ENCODE measurements at regions of chr9 and their contacts with region 1.

Region 1: DNA sequence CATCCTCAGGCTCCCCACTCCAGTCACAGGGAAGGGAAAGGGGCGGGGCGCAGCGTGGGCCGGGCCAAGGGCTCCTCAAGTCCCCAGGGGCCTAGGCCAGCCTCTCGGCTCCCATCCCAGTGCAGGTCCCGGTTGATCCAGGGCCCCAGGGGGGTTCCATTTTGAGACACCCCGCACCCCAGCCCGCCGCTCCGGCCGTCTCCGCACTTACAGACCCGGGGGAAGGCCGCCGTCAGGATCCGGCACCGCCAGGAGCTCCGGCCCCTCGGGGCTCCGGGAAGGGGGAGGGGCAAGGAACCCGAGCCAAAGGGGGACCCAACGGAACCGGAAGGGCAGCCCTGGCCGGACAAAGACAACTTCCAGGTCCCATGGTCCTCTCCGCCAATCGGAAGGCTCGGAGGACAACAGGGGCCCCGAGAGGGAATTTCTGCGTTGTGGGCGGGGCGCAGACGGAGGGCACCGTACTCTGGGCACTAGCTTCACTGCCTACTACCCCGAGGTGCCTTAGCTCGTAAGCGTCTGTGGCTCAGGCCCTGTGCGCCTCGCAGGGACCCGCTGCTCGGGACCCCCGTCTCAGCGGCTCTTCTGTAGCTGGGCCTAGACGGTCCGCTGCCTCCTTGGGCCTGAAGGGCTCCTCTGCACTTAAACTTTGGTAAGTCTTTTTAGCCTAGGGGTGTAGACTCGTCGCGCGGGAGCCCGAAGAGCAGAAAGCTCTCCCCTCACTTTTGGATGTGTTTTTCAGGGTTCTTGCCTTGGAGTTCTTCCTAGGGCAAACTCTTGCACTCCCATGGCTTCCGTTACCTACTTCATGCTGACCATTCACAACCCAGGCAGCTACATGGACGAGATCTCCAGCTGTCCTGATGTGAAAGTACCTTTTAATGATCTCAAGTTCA is at the start of gene ZBTB26:
- DNase-seq: peak; percentile 93 to 97
- ATAC-seq: peak; percentile 99 to 100 (median 99)
- H3K4me3 ChIP-seq: peak within 1 kb of the TSS; percentile 96
- H3K27ac ChIP-seq: peak within 1 kb of the TSS; percentile 92
- H3K4me1 ChIP-seq: peaks cover 35% of the 10 kb centered on the region
- H3K27me3 ChIP-seq: no peaks in the 10 kb centered on the region
- CTCF ChIP-seq: no peak
- total RNA-seq, gene ZBTB26: 2.0 to 4.8 (median 2.8) TPM

Region 2: GRCh38 chr9:122875523-122875922 is 56.0 kb before region 1 on chr9:
- intact Hi-C with region 1: no loop called
- DNase-seq: no peak
- ATAC-seq: no peak
- H3K4me3 ChIP-seq: no peak overlapping the region
- H3K27ac ChIP-seq: no peak overlapping the region
- H3K4me1 ChIP-seq: no peaks in the 10 kb centered on the region
- H3K27me3 ChIP-seq: no peaks in the 10 kb centered on the region
- CTCF ChIP-seq: no peak

Region 3: GRCh38 chr9:122991370-122991830 is 59.9 kb after region 1 on chr9:
- intact Hi-C with region 1: loop called in 1 of 2 experiments (anchors 10 kb)
- DNase-seq: peak in 1 of 2 donors; percentile 14
- ATAC-seq: peak; percentile 57 to 93 (median 86)
- H3K4me3 ChIP-seq: no peak overlapping the region
- H3K27ac ChIP-seq: no peak overlapping the region
- H3K4me1 ChIP-seq: no peaks in the 10 kb centered on the region
- H3K27me3 ChIP-seq: no peaks in the 10 kb centered on the region
- CTCF ChIP-seq: peak; percentile 71